K562 (cell line): ENCODE measurements at regions of chr1 and their contacts with region 1.

Region 1: DNA sequence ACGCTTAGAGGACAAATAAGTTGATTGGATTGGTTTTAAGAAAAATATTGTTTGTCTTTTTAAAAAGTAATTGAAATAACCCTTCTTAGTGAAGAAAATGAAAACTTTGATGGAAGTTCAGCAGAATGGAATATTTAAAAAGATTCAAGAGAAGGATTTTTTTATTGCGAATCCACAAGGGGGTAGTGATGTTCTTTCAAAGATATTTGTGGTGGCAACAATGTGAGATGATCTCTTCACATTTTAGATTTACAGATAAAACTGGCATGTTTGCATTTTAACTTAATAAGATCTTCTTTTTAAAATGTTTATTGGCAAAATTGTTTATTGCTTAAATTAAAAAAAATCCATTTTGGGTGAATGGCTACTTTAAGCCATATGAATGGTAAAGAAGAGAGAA is 8.9 kb downstream of the CAMTA1 start:
- DNase-seq: peak in 1 of 4 experiments; percentile 36
- ATAC-seq: no peak
- H3K4me3 ChIP-seq: no peak overlapping the region
- H3K27ac ChIP-seq: no peak overlapping the region
- H3K4me1 ChIP-seq: peaks cover 0 to under 1% of the 10 kb centered on the region in 2 experiments; a peak in 1 of 5 replicates
- H3K27me3 ChIP-seq: no peaks in the 10 kb centered on the region
- CTCF ChIP-seq: peak in 2 of 3 experiments; percentile 40 to 71; a peak in 3 of 6 replicates
- EP300 ChIP-seq: no peak
- POLR2A ChIP-seq: no peak
- RAD21 ChIP-seq: peak; percentile 64 to 77

Region 2: GRCh38 chr1:6889875-6890480 is 95.8 kb after region 1 on chr1:
- CTCF ChIA-PET with region 1: interaction called, 12 read pairs
- POLR2A ChIA-PET with region 1: interaction called, 3 read pairs
- in situ Hi-C with region 1: no loop called
- intact Hi-C with region 1: loop called (anchors 2 kb)
- DNase-seq: peak; percentile 50 to 73 (median 58)
- ATAC-seq: peak; percentile 98
- H3K4me3 ChIP-seq: no peak overlapping the region
- H3K27ac ChIP-seq: no peak overlapping the region
- H3K4me1 ChIP-seq: no peaks in the 10 kb centered on the region
- H3K27me3 ChIP-seq: peaks cover 0 to 1% of the 10 kb centered on the region in 2 experiments; a peak in 2 of 5 replicates
- CTCF ChIP-seq: peak; percentile 84 to 92 (median 89)
- EP300 ChIP-seq: no peak
- POLR2A ChIP-seq: no peak
- RAD21 ChIP-seq: peak; percentile 66 to 86

Region 3: GRCh38 chr1:7070389-7071029 is 276.3 kb after region 1 on chr1:
- CTCF ChIA-PET with region 1: interaction called, 3 read pairs
- POLR2A ChIA-PET with region 1: no interaction called
- in situ Hi-C with region 1: loop called (anchors 5 kb)
- intact Hi-C with region 1: loop called (anchors 5 kb)
- DNase-seq: peak; percentile 64 to 74 (median 68)
- ATAC-seq: peak; percentile 96
- H3K4me3 ChIP-seq: no peak overlapping the region
- H3K27ac ChIP-seq: no peak overlapping the region
- H3K4me1 ChIP-seq: peaks cover 0 to 3% of the 10 kb centered on the region in 2 experiments; a peak in 1 of 5 replicates
- H3K27me3 ChIP-seq: peaks cover 12 to 26% of the 10 kb centered on the region in 2 experiments; a peak in 4 of 5 replicates
- CTCF ChIP-seq: peak; percentile 86 to 90 (median 86)
- EP300 ChIP-seq: no peak
- POLR2A ChIP-seq: no peak
- RAD21 ChIP-seq: peak in 1 of 2 experiments; percentile 79; a peak in 3 of 4 replicates

Region 4: GRCh38 chr1:7149080-7149838 is 355.1 kb after region 1 on chr1:
- CTCF ChIA-PET with region 1: no interaction called
- POLR2A ChIA-PET with region 1: no interaction called
- in situ Hi-C with region 1: no loop called
- intact Hi-C with region 1: no loop called
- DNase-seq: no peak
- ATAC-seq: no peak
- H3K4me3 ChIP-seq: no peak overlapping the region
- H3K27ac ChIP-seq: no peak overlapping the region
- H3K4me1 ChIP-seq: peaks cover 0 to 3% of the 10 kb centered on the region in 2 experiments; a peak in 1 of 5 replicates
- H3K27me3 ChIP-seq: peaks cover 35 to 56% of the 10 kb centered on the region in 2 experiments; a peak in 4 of 5 replicates
- CTCF ChIP-seq: no peak
- EP300 ChIP-seq: no peak
- POLR2A ChIP-seq: no peak
- RAD21 ChIP-seq: no peak

Region 5: GRCh38 chr1:7218210-7218832 is 424.2 kb after region 1 on chr1:
- CTCF ChIA-PET with region 1: interaction called, 5 read pairs
- POLR2A ChIA-PET with region 1: no interaction called
- in situ Hi-C with region 1: no loop called
- intact Hi-C with region 1: loop called (anchors 10 kb)
- DNase-seq: peak; percentile 69 to 72 (median 71)
- ATAC-seq: peak; percentile 78
- H3K4me3 ChIP-seq: no peak overlapping the region
- H3K27ac ChIP-seq: no peak overlapping the region
- H3K4me1 ChIP-seq: no peaks in the 10 kb centered on the region
- H3K27me3 ChIP-seq: peaks cover 0 to 29% of the 10 kb centered on the region in 2 experiments; a peak in 3 of 5 replicates
- CTCF ChIP-seq: peak; percentile 78 to 95 (median 89)
- EP300 ChIP-seq: no peak
- POLR2A ChIP-seq: no peak
- RAD21 ChIP-seq: peak; percentile 82 to 90